Psoas muscle (tissue), 8 donors: ENCODE measurements at regions of chr9 and their contacts with region 1.

Region 1: DNA sequence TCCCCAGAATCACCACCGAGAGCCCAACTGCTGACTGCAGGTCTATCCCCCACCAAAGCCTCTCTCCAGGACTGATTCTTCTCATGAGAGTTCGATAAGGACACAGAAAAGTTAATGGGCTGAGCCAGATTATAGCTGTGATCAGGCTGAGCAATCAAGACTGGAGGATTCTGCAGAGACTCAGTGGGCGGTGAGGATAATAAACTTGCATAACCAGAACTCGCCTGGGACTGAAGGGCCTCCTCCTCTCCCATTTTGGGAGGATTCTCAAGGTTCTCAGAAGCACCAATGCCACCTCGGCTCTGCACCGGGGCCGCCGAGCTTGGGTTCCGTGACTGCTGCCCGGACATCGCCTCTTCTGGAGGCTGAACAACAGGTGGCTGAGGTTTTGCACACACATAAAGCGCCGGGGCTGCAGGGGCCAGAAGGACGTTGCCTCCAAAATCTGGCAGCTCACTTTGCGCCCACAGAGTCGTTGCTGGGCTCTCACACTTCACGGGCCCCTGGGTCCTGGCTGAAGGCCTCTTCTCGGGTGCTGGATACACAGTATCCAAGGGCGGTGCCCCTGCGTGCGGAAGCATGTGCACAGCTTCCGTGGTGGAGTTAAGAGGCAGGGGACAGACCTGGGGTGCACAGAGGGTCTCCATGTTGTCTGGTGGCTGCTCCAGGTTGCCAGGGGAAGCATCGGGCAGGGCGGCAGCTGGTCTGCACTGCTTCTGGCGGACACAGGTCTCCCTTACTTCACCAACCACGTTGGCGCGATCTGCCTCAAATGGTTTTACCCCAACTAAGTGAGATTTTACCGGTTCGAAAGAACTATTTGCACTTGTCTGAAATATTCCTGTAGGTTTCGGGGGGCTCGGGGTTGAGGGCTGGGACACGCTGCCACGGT is 7.6 kb downstream of the SEC16A start:
- DNase-seq: no peak
- ATAC-seq: no peak
- H3K4me3 ChIP-seq: no peak overlapping the region
- H3K27ac ChIP-seq: no peak overlapping the region
- H3K4me1 ChIP-seq: no peaks in the 10 kb centered on the region
- H3K27me3 ChIP-seq: no peaks in the 10 kb centered on the region
- CTCF ChIP-seq: no peak

Region 2: DNA sequence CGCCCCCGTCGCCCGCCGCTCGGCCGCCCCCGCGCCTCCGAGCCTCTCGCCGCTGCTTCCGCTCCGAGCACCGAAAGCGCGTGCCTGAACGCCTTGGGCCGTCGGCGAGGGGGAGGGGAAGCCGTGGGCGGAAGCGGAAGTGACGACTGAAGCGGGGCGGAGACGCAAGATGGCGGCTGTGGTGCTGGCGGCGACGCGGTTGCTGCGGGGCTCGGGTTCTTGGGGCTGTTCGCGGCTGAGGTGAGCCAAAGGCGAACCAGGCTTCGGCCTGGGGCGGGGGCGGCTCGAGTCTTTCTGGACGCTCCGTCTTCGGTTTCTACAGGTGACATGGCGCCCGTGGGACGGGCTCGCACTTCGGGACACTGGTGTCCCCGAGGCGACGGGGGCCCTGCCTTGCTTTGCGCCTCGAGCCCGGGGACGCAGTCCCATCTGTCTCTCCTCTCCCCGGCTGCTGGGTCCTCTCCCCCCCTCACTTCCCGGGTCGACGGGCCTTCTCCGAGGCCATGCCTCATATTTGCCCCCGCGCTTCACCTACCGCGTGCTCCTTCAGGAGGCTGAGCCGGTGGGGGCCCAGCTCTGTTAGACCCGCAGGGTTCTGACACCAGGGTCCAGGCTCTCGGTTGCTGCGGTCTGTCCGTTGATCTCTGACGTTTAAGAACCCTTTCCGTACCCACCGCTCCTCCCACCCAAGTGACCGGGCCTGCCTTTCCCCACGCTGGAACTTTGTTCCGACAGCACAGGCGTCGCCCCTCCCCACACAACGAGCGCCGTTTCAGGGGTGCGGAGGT is 64.5 kb before region 1 on chr9 and contains the starts of genes ENTR1 and PMPCA:
- intact Hi-C with region 1: loop called (anchors 5 kb)
- DNase-seq: peak; percentile 94 to 96
- ATAC-seq: peak; percentile 91 to 97 (median 92)
- H3K4me3 ChIP-seq: peak within 1 kb of the TSS; percentile 99
- H3K27ac ChIP-seq: peak within 1 kb of the TSS; percentile 94
- H3K4me1 ChIP-seq: peaks cover 25% of the 10 kb centered on the region
- H3K27me3 ChIP-seq: no peaks in the 10 kb centered on the region
- CTCF ChIP-seq: no peak
- total RNA-seq, gene ENTR1: 16.0 to 39.0 (median 32.3) TPM
- total RNA-seq, gene PMPCA: 52.4 to 68.7 (median 60.6) TPM

Region 3: GRCh38 chr9:136439550-136440408 is 35.4 kb before region 1 on chr9 and contains the start of gene INPP5E:
- intact Hi-C with region 1: loop called in 1 of 2 experiments (anchors 5 kb)
- DNase-seq: peak; percentile 81 to 87
- ATAC-seq: peak; percentile 83 to 90 (median 88)
- H3K4me3 ChIP-seq: peak within 1 kb of the TSS; percentile 95
- H3K27ac ChIP-seq: peak within 1 kb of the TSS; percentile 79
- H3K4me1 ChIP-seq: peaks cover 26% of the 10 kb centered on the region
- H3K27me3 ChIP-seq: no peaks in the 10 kb centered on the region
- CTCF ChIP-seq: peak; percentile 90
- total RNA-seq, gene INPP5E: 4.9 to 9.6 (median 7.4) TPM